ENCODE measurements at regions of chr11 and their contacts with region 1.

Region 1: GRCh38 chr11:120511116-120511819 is at the start of gene GRIK4:
- H3K4me3 Mint-ChIP-seq: no peak within 1 kb of the TSS
- H3K27ac Mint-ChIP-seq: no peak within 1 kb of the TSS
- H3K4me1 Mint-ChIP-seq: no peaks in the 10 kb centered on the region
- H3K27me3 Mint-ChIP-seq: peaks cover 78% of the 10 kb centered on the region

Region 2: GRCh38 chr11:120335908-120336640 is 175.2 kb before region 1 on chr11 and contains the start of gene ARHGEF12:
- intact Hi-C with region 1: no loop called
- H3K4me3 Mint-ChIP-seq: peak within 1 kb of the TSS; percentile 86
- H3K27ac Mint-ChIP-seq: peak within 1 kb of the TSS; percentile 67
- H3K4me1 Mint-ChIP-seq: peaks cover 21% of the 10 kb centered on the region
- H3K27me3 Mint-ChIP-seq: peaks cover 75% of the 10 kb centered on the region

Region 3: GRCh38 chr11:120500414-120501071 is 10.7 kb before region 1 on chr11:
- intact Hi-C with region 1: no loop called
- H3K4me3 Mint-ChIP-seq: no peak overlapping the region
- H3K27ac Mint-ChIP-seq: no peak overlapping the region
- H3K4me1 Mint-ChIP-seq: no peaks in the 10 kb centered on the region
- H3K27me3 Mint-ChIP-seq: peaks cover 39% of the 10 kb centered on the region

Region 4: GRCh38 chr11:120547811-120548681 is 36.8 kb after region 1 on chr11:
- intact Hi-C with region 1: no loop called
- H3K4me3 Mint-ChIP-seq: no peak overlapping the region
- H3K27ac Mint-ChIP-seq: no peak overlapping the region
- H3K4me1 Mint-ChIP-seq: peaks cover 8% of the 10 kb centered on the region
- H3K27me3 Mint-ChIP-seq: peaks cover 23% of the 10 kb centered on the region

Region 5: GRCh38 chr11:120952461-120953434 is 441.5 kb after region 1 on chr11:
- intact Hi-C with region 1: loop called (anchors 10 kb)
- H3K4me3 Mint-ChIP-seq: peak overlapping the region; percentile 63
- H3K27ac Mint-ChIP-seq: peak overlapping the region; percentile 58
- H3K4me1 Mint-ChIP-seq: peaks cover 19% of the 10 kb centered on the region
- H3K27me3 Mint-ChIP-seq: peaks cover 11% of the 10 kb centered on the region